ENCODE measurements at regions of chr2 and their contacts with region 1.

Region 1: GRCh38 chr2:73212448-73213176 is 1.4 kb upstream of the SMYD5 start:
- DNase-seq: no peak
- ATAC-seq: peak; percentile 86
- H3K4me3 ChIP-seq: no peak overlapping the region
- H3K27ac ChIP-seq: no peak overlapping the region
- H3K4me1 ChIP-seq: peaks cover 8% of the 10 kb centered on the region
- H3K27me3 ChIP-seq: no peaks in the 10 kb centered on the region
- CTCF ChIP-seq: peak; percentile 88 to 97 (median 96)
- EP300 ChIP-seq: no peak
- POLR2A ChIP-seq: no peak
- RAD21 ChIP-seq: peak; percentile 63

Region 2: DNA sequence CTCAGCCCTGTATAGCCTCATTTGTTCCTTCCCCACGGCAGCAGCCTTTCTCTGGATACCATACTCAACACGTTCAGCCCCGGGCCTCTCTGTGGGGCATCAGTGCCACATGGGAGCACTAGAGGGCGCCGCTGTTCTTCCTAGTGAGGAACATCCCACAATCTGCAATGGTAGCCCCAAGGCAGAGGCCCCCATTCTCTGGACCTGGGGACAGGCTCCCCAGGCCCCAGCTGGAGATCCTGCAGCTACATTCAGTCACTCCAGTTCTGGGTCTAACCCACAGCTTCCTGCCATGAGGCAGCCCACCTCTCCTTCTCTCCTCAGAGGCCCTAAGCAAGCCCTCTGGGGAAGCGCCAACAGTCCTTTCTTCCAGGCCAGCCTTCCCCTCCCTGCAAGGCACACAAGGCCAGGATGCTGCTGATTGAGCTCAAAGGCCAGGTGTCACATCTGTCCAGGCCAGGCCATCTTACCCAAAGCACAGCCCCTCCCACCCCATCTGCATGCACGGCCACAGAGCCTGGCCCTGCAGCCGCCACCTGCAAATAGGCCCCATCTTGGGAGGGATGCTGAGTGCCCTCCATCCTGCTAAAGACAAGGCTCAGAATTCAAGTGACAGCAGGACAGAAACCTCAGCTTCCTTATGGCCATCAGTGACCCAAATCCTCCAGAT is 126.8 kb before region 1 on chr2:
- CTCF ChIA-PET with region 1: interaction called, 30 read pairs
- POLR2A ChIA-PET with region 1: interaction called, 4 read pairs
- RAD21 ChIA-PET with region 1: interaction called, 3 read pairs
- SMC1A ChIA-PET with region 1: interaction called, 18 read pairs
- in situ Hi-C with region 1: no loop called
- intact Hi-C with region 1: loop called (anchors 1 kb)
- DNase-seq: no peak
- ATAC-seq: peak; percentile 98
- H3K4me3 ChIP-seq: no peak overlapping the region
- H3K27ac ChIP-seq: no peak overlapping the region
- H3K4me1 ChIP-seq: no peaks in the 10 kb centered on the region
- H3K27me3 ChIP-seq: no peaks in the 10 kb centered on the region; a peak in 2 of 4 replicates
- CTCF ChIP-seq: peak; percentile 93 to 95 (median 94)
- EP300 ChIP-seq: no peak
- POLR2A ChIP-seq: no peak
- RAD21 ChIP-seq: peak; percentile 92

Region 3: DNA sequence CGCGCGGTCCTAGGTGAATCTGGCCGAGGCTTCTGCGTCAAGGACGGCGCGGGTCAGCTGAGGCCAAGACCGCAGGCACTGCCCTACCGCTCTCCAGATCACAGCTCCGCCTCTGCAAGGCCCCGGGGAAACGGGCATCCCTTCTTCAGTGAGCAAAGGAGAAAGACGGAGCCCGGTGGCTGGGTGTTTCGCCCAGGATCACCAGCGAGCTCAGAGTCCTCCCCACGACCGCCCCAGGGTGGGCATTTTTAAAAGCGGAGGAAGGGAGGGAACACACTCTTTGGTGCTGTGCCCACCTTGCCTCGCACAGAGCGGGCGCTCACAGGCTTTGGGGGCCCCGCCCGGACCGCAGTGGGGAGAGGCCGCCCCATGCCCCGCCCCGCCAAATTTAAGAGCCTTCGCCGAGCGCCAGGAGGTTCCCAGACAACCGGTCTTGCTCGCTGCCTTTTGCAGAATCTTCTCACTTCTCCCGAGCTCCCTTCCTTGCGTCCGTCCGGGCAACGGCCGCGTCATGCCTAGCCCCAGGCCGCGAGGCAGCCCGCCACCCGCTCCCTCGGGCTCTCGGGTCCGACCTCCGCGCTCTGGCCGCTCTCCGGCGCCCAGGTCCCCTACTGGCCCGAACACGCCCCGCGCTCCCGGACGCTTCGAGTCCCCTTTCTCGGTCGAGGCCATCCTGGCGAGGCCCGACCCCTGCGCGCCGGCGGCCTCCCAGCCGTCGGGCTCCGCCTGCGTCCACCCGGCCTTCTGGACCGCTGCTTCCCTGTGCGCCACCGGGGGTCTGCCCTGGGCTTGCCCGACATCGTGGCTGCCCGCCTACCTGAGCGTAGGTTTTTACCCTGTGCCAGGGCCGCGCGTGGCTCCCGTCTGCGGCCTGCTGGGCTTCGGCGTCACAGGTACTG is 10.2 kb before region 1 on chr2 and contains the start of gene NOTO:
- CTCF ChIA-PET with region 1: interaction called, 12 read pairs
- POLR2A ChIA-PET with region 1: no interaction called
- RAD21 ChIA-PET with region 1: interaction called, 4 read pairs
- SMC1A ChIA-PET with region 1: no interaction called
- in situ Hi-C with region 1: no loop called
- intact Hi-C with region 1: no loop called
- DNase-seq: no peak
- ATAC-seq: no peak
- H3K4me3 ChIP-seq: no peak within 1 kb of the TSS
- H3K27ac ChIP-seq: no peak within 1 kb of the TSS
- H3K4me1 ChIP-seq: no peaks in the 10 kb centered on the region
- H3K27me3 ChIP-seq: peaks cover 0 to 3% of the 10 kb centered on the region in 2 experiments; a peak in 2 of 4 replicates
- CTCF ChIP-seq: no peak
- EP300 ChIP-seq: no peak
- POLR2A ChIP-seq: no peak
- RAD21 ChIP-seq: no peak
- polyA plus RNA-seq, gene NOTO: not detected

Region 4: GRCh38 chr2:73223821-73224220 is 11.2 kb after region 1 on chr2:
- CTCF ChIA-PET with region 1: interaction called, 27 read pairs
- POLR2A ChIA-PET with region 1: interaction called, 4 read pairs
- RAD21 ChIA-PET with region 1: no interaction called
- SMC1A ChIA-PET with region 1: interaction called, 5 read pairs
- in situ Hi-C with region 1: no loop called
- intact Hi-C with region 1: no loop called
- DNase-seq: no peak
- ATAC-seq: no peak
- H3K4me3 ChIP-seq: no peak overlapping the region
- H3K27ac ChIP-seq: no peak overlapping the region
- H3K4me1 ChIP-seq: no peaks in the 10 kb centered on the region
- H3K27me3 ChIP-seq: no peaks in the 10 kb centered on the region
- CTCF ChIP-seq: no peak
- EP300 ChIP-seq: no peak
- POLR2A ChIP-seq: no peak
- RAD21 ChIP-seq: no peak

Region 5: GRCh38 chr2:73233154-73233931 is 20.7 kb after region 1 on chr2 and contains the start of gene PRADC1:
- CTCF ChIA-PET with region 1: interaction called, 35 read pairs
- POLR2A ChIA-PET with region 1: interaction called, 14 read pairs
- RAD21 ChIA-PET with region 1: interaction called, 22 read pairs
- SMC1A ChIA-PET with region 1: interaction called, 7 read pairs
- in situ Hi-C with region 1: no loop called
- intact Hi-C with region 1: loop called (anchors 1 kb)
- DNase-seq: peak; percentile 97
- ATAC-seq: peak; percentile 93
- H3K4me3 ChIP-seq: peak within 1 kb of the TSS; percentile 78
- H3K27ac ChIP-seq: peak within 1 kb of the TSS; percentile 91
- H3K4me1 ChIP-seq: peaks cover 4% of the 10 kb centered on the region
- H3K27me3 ChIP-seq: no peaks in the 10 kb centered on the region
- CTCF ChIP-seq: no peak
- EP300 ChIP-seq: no peak
- POLR2A ChIP-seq: peak; percentile 77
- RAD21 ChIP-seq: no peak
- polyA plus RNA-seq, gene PRADC1: 3.7 to 8.1 TPM

Region 6: DNA sequence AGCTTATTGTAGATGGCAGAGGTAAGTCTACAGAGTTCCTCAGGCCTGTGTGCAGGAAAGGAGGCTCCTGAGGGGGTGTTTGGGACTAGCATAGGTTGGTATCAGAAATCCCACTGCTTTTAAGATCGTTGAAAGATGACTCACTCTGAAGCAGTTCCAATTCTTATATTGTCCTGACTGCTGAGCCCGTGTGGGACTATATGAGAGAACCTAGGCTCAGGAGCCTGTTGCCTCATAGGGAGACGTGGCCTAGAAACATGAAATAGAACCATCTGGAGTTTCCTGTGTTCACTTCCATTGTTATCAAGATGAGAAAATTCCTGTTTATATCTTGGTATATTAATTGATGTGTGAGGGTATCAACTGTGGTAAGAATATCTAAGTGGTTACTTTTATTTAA is 27.2 kb after region 1 on chr2:
- CTCF ChIA-PET with region 1: interaction called, 35 read pairs
- POLR2A ChIA-PET with region 1: interaction called, 14 read pairs
- RAD21 ChIA-PET with region 1: interaction called, 22 read pairs
- SMC1A ChIA-PET with region 1: interaction called, 4 read pairs
- in situ Hi-C with region 1: no loop called
- intact Hi-C with region 1: loop called (anchors 1 kb)
- DNase-seq: no peak
- ATAC-seq: no peak
- H3K4me3 ChIP-seq: no peak overlapping the region
- H3K27ac ChIP-seq: no peak overlapping the region
- H3K4me1 ChIP-seq: no peaks in the 10 kb centered on the region
- H3K27me3 ChIP-seq: no peaks in the 10 kb centered on the region
- CTCF ChIP-seq: no peak
- EP300 ChIP-seq: no peak
- POLR2A ChIP-seq: no peak
- RAD21 ChIP-seq: no peak

Region 7: DNA sequence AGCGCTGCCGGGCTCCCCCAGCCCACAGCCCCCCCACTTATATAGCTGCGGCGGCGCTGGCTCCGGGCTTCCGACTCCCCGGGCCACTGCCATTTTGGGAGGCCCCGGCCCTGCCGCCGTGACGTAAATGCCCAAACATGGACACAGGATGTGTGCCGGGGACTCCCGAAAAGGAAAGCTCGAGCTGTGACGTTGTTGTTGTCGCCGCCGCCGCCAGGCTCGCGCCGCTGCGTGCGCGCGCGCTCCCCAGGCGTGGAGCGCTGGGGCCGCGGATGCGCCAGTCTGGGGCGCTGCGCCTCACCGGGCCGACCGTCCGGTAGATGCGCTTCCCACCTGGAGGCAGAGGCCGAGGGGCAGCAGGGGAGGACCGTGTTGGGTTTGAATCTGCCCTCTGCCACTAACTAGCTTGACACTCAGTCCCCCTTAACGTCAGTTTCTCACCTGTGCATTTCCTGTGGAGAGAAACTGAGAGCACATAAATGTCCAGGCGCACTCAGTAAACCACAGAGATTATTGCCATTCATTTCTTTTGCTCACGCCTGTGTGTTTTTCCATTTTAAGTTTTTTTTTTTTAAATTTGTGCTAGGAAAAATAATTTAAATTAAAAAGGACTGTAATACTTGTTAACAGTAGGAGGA is 81.0 kb after region 1 on chr2 and contains the start of gene EGR4:
- CTCF ChIA-PET with region 1: interaction called, 50 read pairs
- POLR2A ChIA-PET with region 1: interaction called, 4 read pairs
- RAD21 ChIA-PET with region 1: interaction called, 19 read pairs
- SMC1A ChIA-PET with region 1: interaction called, 24 read pairs
- in situ Hi-C with region 1: no loop called
- intact Hi-C with region 1: no loop called
- DNase-seq: peak; percentile 34
- ATAC-seq: peak; percentile 91
- H3K4me3 ChIP-seq: peak within 1 kb of the TSS; percentile 55
- H3K27ac ChIP-seq: no peak within 1 kb of the TSS
- H3K4me1 ChIP-seq: peaks cover 4% of the 10 kb centered on the region; the same call in 1 of the 2 replicates
- H3K27me3 ChIP-seq: peaks cover 13 to 29% of the 10 kb centered on the region in 2 experiments
- CTCF ChIP-seq: no peak
- EP300 ChIP-seq: no peak
- POLR2A ChIP-seq: no peak
- RAD21 ChIP-seq: no peak
- polyA plus RNA-seq, gene EGR4: not detected

Measured in GM12878 (cell line).